Cardiac septum (tissue), 1 donor: ENCODE measurements at regions of chr18 and their contacts with region 1.

Region 1: DNA sequence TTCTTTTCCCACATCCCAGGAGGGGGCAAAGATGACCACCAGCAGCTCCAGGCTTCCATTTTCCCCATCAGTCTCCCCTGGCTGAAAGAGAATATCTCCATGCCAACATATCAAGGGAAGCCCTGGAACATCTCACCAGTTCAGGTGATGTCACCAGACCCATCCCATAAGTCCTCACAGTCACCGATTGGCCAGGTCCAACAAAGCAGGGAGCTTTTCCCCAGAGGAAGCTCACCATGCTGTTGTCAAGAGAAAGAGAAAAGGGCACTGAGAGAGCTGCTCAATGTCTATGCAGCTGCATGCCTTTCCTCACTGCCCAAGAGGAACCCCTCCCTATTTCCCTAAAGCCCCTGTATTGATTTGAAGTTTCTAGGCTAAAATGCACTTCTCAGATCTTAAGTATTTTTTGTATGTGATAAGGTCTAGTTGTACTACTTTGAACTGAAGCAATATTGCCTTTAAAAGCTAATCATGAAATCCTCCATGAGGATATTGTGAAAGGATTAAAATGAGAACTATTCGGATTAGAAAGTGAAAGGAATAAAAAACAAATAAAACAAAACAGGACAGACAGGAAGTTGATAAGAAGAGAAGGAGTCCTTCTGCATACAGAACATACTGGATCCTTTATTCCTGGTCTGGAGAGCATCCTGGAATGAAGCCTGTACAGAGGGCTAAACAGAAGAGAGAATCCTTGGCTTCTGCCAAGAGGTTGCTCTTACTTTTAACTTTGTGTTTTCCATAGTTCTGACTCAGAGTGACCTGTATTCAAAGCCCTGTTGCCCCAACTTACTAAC is 45.2 kb upstream of the CTIF start:
- DNase-seq: no peak

Region 2: DNA sequence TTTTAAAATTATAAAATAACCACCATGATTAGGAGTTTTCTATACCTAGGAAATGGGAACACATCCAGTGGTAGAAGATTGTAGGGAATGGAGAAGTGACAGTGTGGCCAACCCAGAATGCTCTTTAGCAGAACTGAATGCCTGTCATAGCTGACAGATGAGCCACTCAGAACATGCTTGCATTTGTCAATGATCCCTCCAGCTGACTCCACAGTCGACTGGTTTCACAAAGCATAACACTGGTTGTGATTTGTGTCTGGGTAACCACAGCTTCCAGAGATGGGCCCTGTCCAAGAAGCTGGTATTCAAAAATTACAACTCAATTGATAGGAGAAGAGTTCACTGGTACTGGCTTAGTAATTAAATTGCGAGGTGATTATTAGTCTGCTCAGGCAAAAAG is 36.2 kb after region 1 on chr18:
- intact Hi-C with region 1: loop called (anchors 5 kb)
- DNase-seq: no peak

Region 3: DNA sequence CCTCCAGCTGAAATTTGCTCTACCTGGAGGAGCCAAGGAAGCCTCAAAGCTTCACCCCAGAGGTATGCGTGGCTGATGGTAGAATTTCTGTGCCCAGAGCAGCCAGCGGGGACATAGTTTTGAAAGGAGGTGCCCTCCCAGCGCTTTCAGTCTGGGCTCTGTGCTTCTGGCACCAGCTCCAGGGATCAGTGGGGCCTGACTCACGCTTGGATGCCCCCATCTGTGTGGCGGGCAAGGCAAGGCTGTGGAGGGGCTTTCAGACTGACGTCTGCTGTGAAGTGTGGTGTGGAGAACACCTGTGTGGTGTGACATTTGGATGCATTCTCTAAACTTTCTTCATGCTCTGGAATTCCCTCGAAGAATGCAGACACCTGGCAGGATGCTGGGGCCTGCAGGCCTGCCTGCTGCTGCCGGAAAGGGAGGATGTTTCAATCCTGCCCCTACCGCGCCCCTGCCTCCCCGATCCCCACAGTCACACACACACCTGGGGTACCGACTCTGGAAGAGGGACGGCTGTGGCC is 129.3 kb after region 1 on chr18:
- intact Hi-C with region 1: no loop called
- DNase-seq: no peak